ENCODE measurements at regions of chr18 and their contacts with region 1.

Region 1: GRCh38 chr18:24672165-24672941 is 211.9 kb downstream of the HRH4 start:
- DNase-seq: peak in 1 of 10 donors; percentile 13

Region 2: GRCh38 chr18:24600076-24600654 is 72.2 kb before region 1 on chr18:
- intact Hi-C with region 1: loop called (anchors 2 kb)
- DNase-seq: no peak

Region 3: GRCh38 chr18:24721388-24721787 is 49.0 kb after region 1 on chr18:
- intact Hi-C with region 1: loop called (anchors 5 kb)
- DNase-seq: no peak

Region 4: GRCh38 chr18:25180973-25181548 is 508.7 kb after region 1 on chr18:
- intact Hi-C with region 1: no loop called
- DNase-seq: no peak